ENCODE measurements at regions of chr17 and their contacts with region 1.

Region 1: DNA sequence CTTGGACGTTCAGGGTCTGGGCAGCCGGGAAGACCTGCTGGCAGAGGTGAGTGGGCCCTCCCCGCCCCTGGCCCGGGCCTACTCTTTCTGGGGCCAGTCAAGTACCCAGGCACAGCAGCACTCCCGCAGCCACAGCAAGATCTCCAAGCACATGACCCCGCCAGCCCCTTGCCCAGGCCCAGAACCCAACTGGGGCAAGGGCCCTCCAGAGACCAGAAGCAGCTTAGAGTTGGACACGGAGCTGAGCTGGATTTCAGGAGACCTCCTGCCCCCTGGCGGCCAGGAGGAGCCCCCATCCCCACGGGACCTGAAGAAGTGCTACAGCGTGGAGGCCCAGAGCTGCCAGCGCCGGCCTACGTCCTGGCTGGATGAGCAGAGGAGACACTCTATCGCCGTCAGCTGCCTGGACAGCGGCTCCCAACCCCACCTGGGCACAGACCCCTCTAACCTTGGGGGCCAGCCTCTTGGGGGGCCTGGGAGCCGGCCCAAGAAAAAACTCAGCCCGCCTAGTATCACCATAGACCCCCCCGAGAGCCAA is 8.6 kb upstream of the ABCC3 start:
- DNase-seq: peak; percentile 58
- ATAC-seq: peak; percentile 81
- H3K4me3 ChIP-seq: no peak overlapping the region
- H3K27ac ChIP-seq: peak overlapping the region; percentile 9; the same call in 1 of the 2 replicates
- H3K4me1 ChIP-seq: peaks cover 9 to 32% of the 10 kb centered on the region in 2 experiments; a peak in 3 of 4 replicates
- H3K27me3 ChIP-seq: no peaks in the 10 kb centered on the region
- CTCF ChIP-seq: peak; percentile 90 to 96 (median 92)
- POLR2A ChIP-seq: no peak
- RAD21 ChIP-seq: peak; percentile 92

Region 2: GRCh38 chr17:50547035-50547735 is 78.9 kb before region 1 on chr17 and contains the start of gene SPATA20:
- CTCF ChIA-PET with region 1: interaction called, 63 read pairs
- POLR2A ChIA-PET with region 1: interaction called, 3 read pairs
- RAD21 ChIA-PET with region 1: interaction called, 14 to 17 read pairs
- intact Hi-C with region 1: loop called (anchors 1 kb)
- DNase-seq: peak; percentile 80
- ATAC-seq: peak; percentile 75
- H3K4me3 ChIP-seq: peak within 1 kb of the TSS; percentile 65 to 85
- H3K27ac ChIP-seq: peak within 1 kb of the TSS; percentile 75
- H3K4me1 ChIP-seq: peaks cover 27 to 58% of the 10 kb centered on the region in 2 experiments
- H3K27me3 ChIP-seq: no peaks in the 10 kb centered on the region
- CTCF ChIP-seq: peak in 2 of 3 experiments; percentile 98 to 100; a peak in 4 of 6 replicates
- POLR2A ChIP-seq: peak; percentile 79
- RAD21 ChIP-seq: no peak
- total RNA-seq, gene SPATA20: 57.5 TPM

Region 3: GRCh38 chr17:50661795-50662391 is 35.8 kb after region 1 on chr17:
- CTCF ChIA-PET with region 1: interaction called, 13 read pairs
- POLR2A ChIA-PET with region 1: no interaction called
- RAD21 ChIA-PET with region 1: interaction called, 3 to 6 read pairs
- intact Hi-C with region 1: no loop called
- DNase-seq: peak; percentile 92
- ATAC-seq: peak; percentile 82
- H3K4me3 ChIP-seq: peak overlapping the region; percentile 19 to 44
- H3K27ac ChIP-seq: peak overlapping the region; percentile 96
- H3K4me1 ChIP-seq: peaks cover 61 to 91% of the 10 kb centered on the region in 2 experiments
- H3K27me3 ChIP-seq: no peaks in the 10 kb centered on the region
- CTCF ChIP-seq: no peak
- POLR2A ChIP-seq: no peak
- RAD21 ChIP-seq: no peak

Region 4: DNA sequence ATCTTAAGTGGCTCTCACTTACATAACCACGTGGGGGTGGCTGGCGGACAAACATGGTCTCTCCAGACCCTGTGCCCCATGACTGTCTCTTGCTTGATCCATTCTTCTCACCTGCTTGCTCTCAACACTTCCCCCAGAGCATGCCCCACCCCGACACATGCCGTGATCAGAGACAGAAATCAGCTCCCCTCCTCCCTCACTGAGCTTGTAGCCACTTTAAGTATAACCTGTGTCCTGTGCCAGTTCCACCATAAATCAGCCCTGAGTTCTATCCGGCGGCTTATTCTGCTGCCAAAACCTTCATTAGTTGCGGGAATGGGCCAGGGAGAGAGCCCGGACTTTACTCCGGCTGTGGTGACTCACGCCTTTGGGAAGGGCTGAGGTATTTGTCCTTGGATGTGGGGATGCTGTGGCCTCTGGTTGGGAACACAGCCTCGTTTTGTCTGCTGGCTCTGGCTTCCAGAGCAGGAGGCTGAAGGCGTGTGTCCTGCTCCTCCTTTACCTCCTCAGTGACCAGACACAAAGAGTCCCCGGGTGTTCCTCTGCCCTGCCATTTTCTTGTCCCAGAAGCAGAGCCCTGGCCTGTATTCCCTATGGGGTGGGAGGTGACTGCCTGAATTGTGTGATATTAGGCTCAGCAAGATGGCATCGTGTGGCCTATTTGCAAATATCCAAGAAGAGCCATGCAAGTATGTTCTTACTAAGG is 60.5 kb after region 1 on chr17:
- CTCF ChIA-PET with region 1: interaction called, 107 read pairs
- POLR2A ChIA-PET with region 1: interaction called, 6 read pairs
- RAD21 ChIA-PET with region 1: interaction called, 5 to 7 read pairs
- intact Hi-C with region 1: loop called (anchors 1 kb)
- DNase-seq: peak; percentile 92
- ATAC-seq: peak; percentile 74
- H3K4me3 ChIP-seq: peak overlapping the region; percentile 13 to 46
- H3K27ac ChIP-seq: peak overlapping the region; percentile 97
- H3K4me1 ChIP-seq: peaks cover 83 to 98% of the 10 kb centered on the region in 2 experiments
- H3K27me3 ChIP-seq: no peaks in the 10 kb centered on the region
- CTCF ChIP-seq: no peak
- POLR2A ChIP-seq: peak; percentile 33
- RAD21 ChIP-seq: no peak; the same call in 1 of the 2 replicates

Region 5: GRCh38 chr17:50707289-50708049 is 81.4 kb after region 1 on chr17 and contains the start of gene ANKRD40:
- CTCF ChIA-PET with region 1: interaction called, 25 read pairs
- POLR2A ChIA-PET with region 1: no interaction called
- RAD21 ChIA-PET with region 1: interaction called in 1 of 2 experiments, 8 read pairs
- intact Hi-C with region 1: no loop called
- DNase-seq: peak; percentile 90
- ATAC-seq: peak; percentile 79
- H3K4me3 ChIP-seq: peak within 1 kb of the TSS; percentile 76 to 79
- H3K27ac ChIP-seq: peak within 1 kb of the TSS; percentile 96
- H3K4me1 ChIP-seq: peaks cover 14 to 43% of the 10 kb centered on the region in 2 experiments
- H3K27me3 ChIP-seq: no peaks in the 10 kb centered on the region
- CTCF ChIP-seq: no peak
- POLR2A ChIP-seq: peak; percentile 75
- RAD21 ChIP-seq: peak; percentile 25; the same call in 1 of the 2 replicates
- total RNA-seq, gene ANKRD40: 72.0 TPM

Region 6: DNA sequence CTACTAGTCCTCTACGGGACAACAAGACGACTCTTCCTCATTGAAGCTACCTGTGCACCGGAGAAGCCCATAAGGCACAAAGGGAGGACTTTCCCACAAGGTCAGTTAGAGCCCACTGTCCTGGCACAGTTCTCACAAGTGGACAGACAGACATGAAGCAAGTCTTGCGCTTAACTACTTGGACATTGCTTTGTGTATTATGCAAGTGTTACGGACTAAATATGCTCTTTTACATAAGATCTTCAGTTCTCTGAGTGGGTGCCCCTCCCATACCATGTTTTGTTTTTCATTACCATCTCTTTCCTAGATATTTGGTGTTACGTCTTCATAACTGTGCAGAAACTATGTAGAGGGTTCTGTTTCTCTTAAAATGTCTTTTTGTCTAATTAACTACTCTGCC is 123.1 kb after region 1 on chr17:
- CTCF ChIA-PET with region 1: no interaction called
- POLR2A ChIA-PET with region 1: no interaction called
- RAD21 ChIA-PET with region 1: no interaction called
- intact Hi-C with region 1: no loop called
- DNase-seq: no peak
- ATAC-seq: no peak
- H3K4me3 ChIP-seq: no peak overlapping the region
- H3K27ac ChIP-seq: no peak overlapping the region
- H3K4me1 ChIP-seq: no peaks in the 10 kb centered on the region
- H3K27me3 ChIP-seq: no peaks in the 10 kb centered on the region
- CTCF ChIP-seq: no peak
- POLR2A ChIP-seq: no peak
- RAD21 ChIP-seq: no peak

Region 7: DNA sequence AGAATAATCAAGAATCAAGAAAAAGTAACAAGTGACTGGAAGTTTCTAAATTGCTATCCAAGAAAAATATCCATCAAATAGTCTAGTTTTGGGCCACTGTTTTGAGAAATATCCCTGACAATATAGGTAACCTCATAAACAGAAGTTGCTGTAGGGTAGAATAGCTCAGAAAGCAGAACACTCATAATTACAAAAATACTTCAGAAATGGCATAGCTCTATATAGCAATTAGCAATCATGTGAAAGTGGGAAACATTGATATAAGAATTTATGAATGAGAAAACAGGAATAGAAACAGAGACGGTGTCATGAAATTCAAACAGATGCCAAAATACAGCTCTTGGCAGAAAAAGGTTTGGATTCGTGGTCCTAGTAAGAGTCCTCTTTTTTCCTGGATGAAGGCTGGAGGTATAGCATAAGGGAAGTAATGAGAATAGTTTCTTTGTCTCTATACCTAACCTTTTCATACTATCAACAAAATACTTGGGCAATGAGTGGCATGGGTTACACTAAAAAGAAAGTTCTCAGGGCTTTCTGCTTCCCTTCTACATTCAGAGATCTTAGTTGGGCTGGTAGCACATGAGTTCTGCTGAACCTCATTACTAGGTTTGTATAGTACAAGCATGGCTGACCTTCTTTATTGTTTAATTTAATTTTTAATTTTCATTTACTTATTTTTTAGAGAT is 461.1 kb after region 1 on chr17:
- CTCF ChIA-PET with region 1: no interaction called
- POLR2A ChIA-PET with region 1: no interaction called
- RAD21 ChIA-PET with region 1: no interaction called
- intact Hi-C with region 1: no loop called
- DNase-seq: no peak
- ATAC-seq: no peak
- H3K4me3 ChIP-seq: no peak overlapping the region
- H3K27ac ChIP-seq: no peak overlapping the region
- H3K4me1 ChIP-seq: peaks cover 2 to 19% of the 10 kb centered on the region in 2 experiments; a peak in 2 of 4 replicates
- H3K27me3 ChIP-seq: no peaks in the 10 kb centered on the region
- CTCF ChIP-seq: no peak
- POLR2A ChIP-seq: no peak
- RAD21 ChIP-seq: no peak